ENCODE measurements at regions of chr4 and their contacts with region 1.

Region 1: DNA sequence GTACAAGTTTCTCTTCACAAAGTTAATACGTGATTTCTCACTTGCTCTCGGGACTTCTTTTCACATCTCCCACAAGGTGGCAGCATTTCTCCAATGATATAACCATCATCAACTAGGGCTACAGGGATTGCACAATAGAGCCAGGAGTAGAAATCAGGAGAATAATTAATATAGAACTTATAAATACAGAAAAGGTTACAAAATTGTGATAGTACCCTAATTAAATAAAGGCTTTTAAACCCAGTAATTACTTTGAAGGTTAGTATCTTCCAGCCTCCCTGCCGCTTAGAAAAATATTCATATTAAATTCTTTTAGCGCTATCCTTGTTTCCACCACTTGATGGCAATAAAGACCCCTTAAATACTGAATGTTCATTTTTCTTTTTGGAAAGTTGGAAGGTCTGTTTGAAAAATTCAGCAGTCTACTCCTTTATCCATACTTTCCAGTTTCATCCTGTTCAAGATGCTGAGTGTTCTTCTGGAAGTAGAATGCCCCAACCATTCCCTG is 65.8 kb downstream of the RASGEF1B start:
- DNase-seq: no peak
- ATAC-seq: peak; percentile 93

Region 2: GRCh38 chr4:81214881-81215868 is 190.8 kb before region 1 on chr4 and contains the start of gene PRKG2:
- intact Hi-C with region 1: no loop called
- DNase-seq: peak; percentile 36
- ATAC-seq: peak; percentile 29
- total RNA-seq, gene PRKG2: 0.05 TPM

Region 3: GRCh38 chr4:81844717-81845116 is 438.8 kb after region 1 on chr4:
- intact Hi-C with region 1: loop called (anchors 10 kb)
- DNase-seq: peak; percentile 66
- ATAC-seq: peak; percentile 97

Region 4: GRCh38 chr4:82201805-82202641 is 796.1 kb after region 1 on chr4:
- intact Hi-C with region 1: loop called (anchors 5 kb)
- DNase-seq: no peak
- ATAC-seq: no peak

Region 5: DNA sequence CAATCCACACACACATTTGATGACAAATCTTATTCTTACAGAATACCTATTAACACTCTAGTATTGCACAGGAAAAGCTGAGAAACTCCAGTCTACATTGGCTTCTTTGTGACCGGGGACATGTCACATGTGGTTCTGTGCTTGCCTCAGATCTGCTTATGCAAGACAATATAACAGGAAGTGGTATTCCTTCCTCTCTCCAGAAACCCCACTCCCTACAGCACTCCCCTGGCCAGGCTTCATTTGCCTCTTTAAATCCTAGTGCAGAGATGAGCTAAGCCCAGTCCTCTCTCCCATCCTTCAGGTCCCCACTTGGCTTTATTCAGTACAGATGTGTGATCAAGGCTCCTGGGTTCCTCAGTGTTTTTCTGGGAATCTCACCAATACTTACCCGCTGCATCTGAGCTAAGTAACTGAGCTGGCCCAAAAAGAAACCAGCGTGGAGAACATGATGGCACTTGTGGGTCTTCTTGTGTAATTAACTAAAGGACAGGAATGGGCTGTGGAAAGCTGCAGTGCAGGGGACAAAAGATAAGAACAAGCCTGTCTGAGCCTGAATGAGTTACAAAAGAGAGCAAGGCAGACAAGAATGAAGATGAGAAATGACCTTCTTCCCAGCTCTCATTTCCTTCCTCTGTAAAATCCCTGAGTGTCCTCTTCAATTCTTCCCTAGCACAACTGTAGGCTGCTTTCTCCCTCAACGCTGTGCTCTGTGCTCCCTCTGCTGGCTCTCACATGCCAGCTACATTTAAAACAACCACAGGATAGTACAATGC is 862.3 kb after region 1 on chr4:
- intact Hi-C with region 1: loop called (anchors 5 kb)
- DNase-seq: peak; percentile 48
- ATAC-seq: peak; percentile 96

Measured in Right ventricle myocardium superior (tissue), 1 donor.